Aorta (tissue), 5 donors: ENCODE measurements at regions of chr5 and their contacts with region 1.

Region 1: DNA sequence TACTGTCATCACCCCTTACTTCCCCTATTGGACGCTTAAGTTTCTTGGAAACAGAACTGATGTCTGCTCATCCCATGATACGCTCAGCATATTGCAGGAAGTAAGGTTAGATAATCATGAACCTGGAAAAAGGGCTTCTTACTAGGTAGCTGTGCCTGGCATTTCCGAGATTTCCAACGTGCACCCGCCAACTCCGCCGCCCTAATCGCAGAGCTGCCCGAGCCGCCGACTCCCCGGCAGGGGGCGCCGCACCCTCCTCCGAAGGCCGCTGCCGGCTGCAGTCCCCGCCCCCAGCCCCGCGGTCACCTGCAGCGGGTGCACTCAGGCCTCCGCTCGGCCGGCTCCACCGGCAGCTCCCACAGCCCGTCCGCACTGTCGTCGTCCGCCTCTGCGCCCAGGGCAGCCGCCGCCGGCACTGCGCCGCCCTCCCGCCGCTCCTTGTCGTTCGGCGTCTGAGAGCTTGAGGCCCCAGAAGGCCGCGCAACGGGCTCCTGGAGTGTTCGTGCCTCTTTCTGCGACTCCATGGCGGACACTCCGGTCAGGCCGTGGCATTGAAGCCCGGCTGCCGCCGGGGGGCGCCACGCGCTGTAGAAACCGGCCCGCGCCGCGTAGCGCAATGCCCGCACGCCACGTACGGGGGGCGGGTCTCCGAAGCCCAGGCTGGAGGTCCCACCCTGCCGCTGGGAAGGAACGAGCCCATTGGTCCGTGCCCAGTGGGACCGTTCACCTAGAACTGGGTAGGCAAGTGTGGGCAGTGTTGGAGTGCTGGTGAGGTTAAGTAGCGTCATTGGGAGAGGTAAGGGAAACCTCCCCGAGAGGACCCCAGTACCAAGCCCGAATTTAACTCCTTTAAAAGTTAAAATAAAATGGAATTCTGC is at the start of gene DTWD2:
- DNase-seq: peak; percentile 95 to 98
- ATAC-seq: peak; percentile 100
- H3K4me3 ChIP-seq: peak within 1 kb of the TSS; percentile 54 to 61
- H3K27ac ChIP-seq: peak within 1 kb of the TSS in 1 of 2 donors; percentile 82
- H3K4me1 ChIP-seq: no peaks in the 10 kb centered on the region
- H3K27me3 ChIP-seq: no peaks in the 10 kb centered on the region
- total RNA-seq, gene DTWD2: 4.1 to 6.3 TPM

Region 2: GRCh38 chr5:119070828-119071572 is 82.8 kb after region 1 on chr5 and contains the start of gene DMXL1:
- intact Hi-C with region 1: loop called in 1 of 2 experiments (anchors 2 kb)
- DNase-seq: peak; percentile 100
- ATAC-seq: peak; percentile 99
- H3K4me3 ChIP-seq: peak within 1 kb of the TSS; percentile 79 to 81
- H3K27ac ChIP-seq: peak within 1 kb of the TSS; percentile 52 to 65
- H3K4me1 ChIP-seq: peaks cover 0 to 4% of the 10 kb centered on the region in 2 donors
- H3K27me3 ChIP-seq: no peaks in the 10 kb centered on the region
- total RNA-seq, gene DMXL1: 50.8 to 69.7 TPM